CD8-positive, alpha-beta T cell (primary cell): ENCODE measurements at regions of chr12 and their contacts with region 1.

Region 1: GRCh38 chr12:8949342-8950220 is at the start of gene M6PR:
- DNase-seq: peak; percentile 71 to 95 (median 88)
- ATAC-seq: peak; percentile 72
- H3K4me3 ChIP-seq: peak within 1 kb of the TSS; percentile 97 to 98
- H3K4me3 Mint-ChIP-seq: peak within 1 kb of the TSS; percentile 94
- H3K27ac ChIP-seq: peak within 1 kb of the TSS; percentile 96 to 100
- H3K27ac Mint-ChIP-seq: peak within 1 kb of the TSS; percentile 95
- H3K4me1 ChIP-seq: peaks cover 58% of the 10 kb centered on the region
- H3K4me1 Mint-ChIP-seq: peaks cover 68% of the 10 kb centered on the region
- H3K27me3 ChIP-seq: no peaks in the 10 kb centered on the region
- H3K27me3 Mint-ChIP-seq: no peaks in the 10 kb centered on the region
- CTCF ChIP-seq: peak; percentile 48
- total RNA-seq, gene M6PR: 43.1 to 43.7 TPM

Region 2: DNA sequence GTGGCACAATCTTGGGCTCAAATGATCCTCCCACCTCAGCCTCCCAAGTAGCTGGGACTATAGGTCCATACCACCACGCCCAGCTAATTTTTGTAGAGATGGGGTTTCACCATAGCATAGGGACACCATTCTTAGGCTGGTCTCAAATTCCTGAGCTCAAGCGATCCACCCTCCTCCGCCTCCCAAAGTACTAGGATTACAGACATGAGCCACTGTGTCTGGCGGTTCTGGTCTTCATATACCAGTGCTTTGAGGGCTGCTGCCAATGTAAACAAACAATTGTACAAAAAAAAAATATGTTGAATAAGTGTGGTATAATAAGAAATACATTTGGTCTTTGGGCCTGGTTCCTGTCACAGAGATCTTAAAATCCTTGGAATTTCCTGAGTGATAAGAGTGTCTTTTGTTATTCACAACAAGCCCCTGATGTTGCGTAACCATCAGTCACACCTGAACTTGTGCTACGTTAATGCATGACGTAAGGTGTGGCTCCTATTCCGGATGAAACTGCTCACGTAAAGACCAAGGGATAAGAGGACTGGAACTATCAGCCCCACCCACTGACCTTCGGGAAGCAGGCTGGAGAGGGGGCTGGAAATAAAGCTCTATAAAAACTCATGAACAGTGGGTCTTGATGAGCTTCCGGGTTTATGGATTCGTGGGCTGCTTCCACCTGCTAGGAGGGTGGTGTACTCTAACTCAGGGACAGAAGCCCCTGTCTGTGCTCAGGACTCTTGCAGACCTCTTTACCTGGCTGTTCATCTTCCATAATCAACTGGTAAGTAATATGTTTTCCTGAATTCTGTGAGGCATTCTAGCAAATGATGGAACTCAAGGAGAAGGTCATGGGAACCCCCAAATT is 268.3 kb before region 1 on chr12:
- CTCF ChIA-PET with region 1: interaction called, 3 read pairs
- POLR2A ChIA-PET with region 1: no interaction called
- intact Hi-C with region 1: loop called in 1 of 2 experiments (anchors 5 kb)
- DNase-seq: no peak
- ATAC-seq: no peak
- H3K4me3 ChIP-seq: no peak overlapping the region
- H3K4me3 Mint-ChIP-seq: no peak overlapping the region
- H3K27ac ChIP-seq: no peak overlapping the region
- H3K27ac Mint-ChIP-seq: no peak overlapping the region
- H3K4me1 ChIP-seq: no peaks in the 10 kb centered on the region
- H3K4me1 Mint-ChIP-seq: peaks cover 10% of the 10 kb centered on the region
- H3K27me3 ChIP-seq: no peaks in the 10 kb centered on the region
- H3K27me3 Mint-ChIP-seq: peaks cover 2% of the 10 kb centered on the region
- CTCF ChIP-seq: no peak

Region 3: DNA sequence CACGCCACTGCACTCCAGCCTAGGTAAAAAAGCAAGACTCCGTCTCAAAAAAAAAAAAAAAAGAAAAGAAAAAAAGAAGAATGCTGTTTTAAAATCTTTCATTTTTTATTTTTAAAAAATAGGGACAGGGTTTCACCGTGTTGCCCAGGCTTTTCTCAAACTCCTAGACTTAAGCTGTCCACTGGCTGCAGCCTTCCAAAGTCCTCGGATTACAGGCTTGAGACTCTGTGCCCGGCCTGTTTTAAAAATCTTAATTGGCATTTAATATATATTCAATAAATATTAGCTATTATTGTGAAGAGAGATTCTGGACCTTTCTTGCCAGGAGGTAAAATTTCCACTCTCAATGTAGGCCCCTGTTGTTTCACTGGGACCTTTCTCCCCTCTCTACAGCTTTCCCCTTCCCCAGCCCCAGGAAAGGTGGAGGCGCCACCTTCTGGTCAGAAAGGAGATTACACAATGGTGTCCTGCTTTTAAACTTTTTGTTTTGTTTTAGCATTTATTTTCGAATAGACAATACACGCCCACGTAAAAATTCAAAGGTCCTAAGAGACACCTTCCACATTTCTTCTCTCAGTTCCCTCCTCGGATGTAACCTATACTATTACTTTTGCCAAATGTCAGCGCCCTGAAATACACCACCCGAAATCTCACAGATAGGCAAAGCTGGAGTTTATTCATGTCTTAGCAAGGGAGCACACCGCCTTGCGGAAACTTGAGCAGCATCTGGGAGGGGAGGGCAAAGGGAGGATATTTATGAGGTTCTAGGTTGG is 59.1 kb before region 1 on chr12:
- CTCF ChIA-PET with region 1: interaction called, 7 read pairs
- POLR2A ChIA-PET with region 1: no interaction called
- intact Hi-C with region 1: loop called in 1 of 2 experiments (anchors 1 kb)
- DNase-seq: peak; percentile 30 to 77 (median 55)
- ATAC-seq: peak; percentile 90
- H3K4me3 ChIP-seq: peak overlapping the region; percentile 44 to 55
- H3K4me3 Mint-ChIP-seq: peak overlapping the region; percentile 88
- H3K27ac ChIP-seq: peak overlapping the region in 1 of 2 experiments; percentile 26
- H3K27ac Mint-ChIP-seq: peak overlapping the region; percentile 66
- H3K4me1 ChIP-seq: no peaks in the 10 kb centered on the region
- H3K4me1 Mint-ChIP-seq: peaks cover 4% of the 10 kb centered on the region
- H3K27me3 ChIP-seq: no peaks in the 10 kb centered on the region
- H3K27me3 Mint-ChIP-seq: peaks cover 2% of the 10 kb centered on the region
- CTCF ChIP-seq: peak; percentile 94

Region 4: DNA sequence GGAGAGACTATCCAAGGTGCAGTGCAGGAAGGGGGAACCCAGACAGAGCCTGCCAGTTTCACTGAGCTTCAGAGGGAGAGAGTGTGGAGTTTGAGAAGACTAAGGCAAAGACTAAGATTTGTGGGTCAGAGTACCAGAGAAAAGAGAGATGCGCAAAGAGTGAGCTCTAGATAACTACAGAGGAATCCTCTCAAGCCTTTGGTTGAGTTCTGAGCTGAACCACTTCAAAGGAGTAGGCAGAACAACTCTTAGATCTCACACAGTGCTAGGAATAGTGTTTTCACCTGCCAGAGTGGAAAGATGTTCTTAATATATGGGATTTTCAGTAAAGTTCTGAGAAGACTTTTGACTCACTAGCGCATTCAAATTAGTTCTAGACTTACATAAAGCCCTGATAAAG is 10.6 kb after region 1 on chr12:
- CTCF ChIA-PET with region 1: interaction called, 41 read pairs
- POLR2A ChIA-PET with region 1: interaction called, 8 read pairs
- intact Hi-C with region 1: loop called in 1 of 2 experiments (anchors 1 kb)
- DNase-seq: peak in 2 of 9 experiments; percentile 38 to 64
- ATAC-seq: peak; percentile 96
- H3K4me3 ChIP-seq: no peak overlapping the region
- H3K4me3 Mint-ChIP-seq: peak overlapping the region; percentile 53
- H3K27ac ChIP-seq: peak overlapping the region in 1 of 2 experiments; percentile 17
- H3K27ac Mint-ChIP-seq: peak overlapping the region; percentile 81
- H3K4me1 ChIP-seq: peaks cover 52% of the 10 kb centered on the region
- H3K4me1 Mint-ChIP-seq: peaks cover 63% of the 10 kb centered on the region
- H3K27me3 ChIP-seq: no peaks in the 10 kb centered on the region
- H3K27me3 Mint-ChIP-seq: no peaks in the 10 kb centered on the region
- CTCF ChIP-seq: no peak

Region 5: DNA sequence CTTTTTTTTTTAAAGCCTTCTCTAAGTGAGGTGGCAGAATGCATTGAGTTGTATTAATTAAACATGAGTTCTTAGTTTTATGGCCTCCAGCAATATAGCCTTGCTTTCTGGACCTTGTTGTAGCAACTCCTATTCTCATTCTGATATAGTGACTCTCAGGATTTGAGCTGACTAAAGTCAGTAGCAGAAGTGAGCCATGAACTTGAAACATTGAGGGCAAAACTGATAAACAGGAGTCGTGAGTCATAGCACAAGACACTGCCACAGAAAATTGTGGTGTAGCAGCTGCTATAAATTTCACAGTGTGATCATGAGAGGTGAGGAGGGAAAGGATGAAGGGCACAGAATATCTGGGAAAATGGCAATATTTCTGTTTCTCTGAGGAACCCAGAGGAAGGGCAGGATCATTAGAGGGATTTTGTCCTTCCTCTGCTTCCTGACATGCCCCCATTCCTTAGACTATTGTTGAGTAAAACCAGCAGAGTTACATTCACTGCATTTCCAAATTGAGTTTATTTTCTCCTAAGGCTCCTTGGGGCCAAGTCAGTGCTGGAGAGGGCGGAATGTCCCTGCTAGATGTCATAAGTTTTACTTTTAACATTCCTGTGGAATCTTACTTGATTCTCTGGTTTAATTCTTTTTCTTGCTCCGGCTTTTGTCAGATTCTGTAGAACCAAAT is 47.2 kb after region 1 on chr12:
- CTCF ChIA-PET with region 1: interaction called, 15 read pairs
- POLR2A ChIA-PET with region 1: interaction called, 5 read pairs
- intact Hi-C with region 1: loop called in 1 of 2 experiments (anchors 5 kb)
- DNase-seq: peak in 5 of 9 experiments; percentile 8 to 71 (median 24)
- ATAC-seq: peak; percentile 68
- H3K4me3 ChIP-seq: peak overlapping the region in 1 of 2 experiments; percentile 25
- H3K4me3 Mint-ChIP-seq: peak overlapping the region; percentile 61
- H3K27ac ChIP-seq: peak overlapping the region in 1 of 2 experiments; percentile 83
- H3K27ac Mint-ChIP-seq: peak overlapping the region; percentile 89
- H3K4me1 ChIP-seq: peaks cover 52% of the 10 kb centered on the region
- H3K4me1 Mint-ChIP-seq: peaks cover 65% of the 10 kb centered on the region
- H3K27me3 ChIP-seq: no peaks in the 10 kb centered on the region
- H3K27me3 Mint-ChIP-seq: no peaks in the 10 kb centered on the region
- CTCF ChIP-seq: no peak

Region 6: GRCh38 chr12:9032202-9033178 is 82.9 kb after region 1 on chr12:
- CTCF ChIA-PET with region 1: interaction called, 195 read pairs
- POLR2A ChIA-PET with region 1: interaction called, 20 read pairs
- intact Hi-C with region 1: no loop called
- DNase-seq: no peak
- ATAC-seq: no peak
- H3K4me3 ChIP-seq: no peak overlapping the region
- H3K4me3 Mint-ChIP-seq: no peak overlapping the region
- H3K27ac ChIP-seq: peak overlapping the region in 1 of 2 experiments; percentile 2
- H3K27ac Mint-ChIP-seq: peak overlapping the region; percentile 38
- H3K4me1 ChIP-seq: peaks cover 49% of the 10 kb centered on the region
- H3K4me1 Mint-ChIP-seq: peaks cover 66% of the 10 kb centered on the region
- H3K27me3 ChIP-seq: no peaks in the 10 kb centered on the region
- H3K27me3 Mint-ChIP-seq: no peaks in the 10 kb centered on the region
- CTCF ChIP-seq: no peak

Region 7: DNA sequence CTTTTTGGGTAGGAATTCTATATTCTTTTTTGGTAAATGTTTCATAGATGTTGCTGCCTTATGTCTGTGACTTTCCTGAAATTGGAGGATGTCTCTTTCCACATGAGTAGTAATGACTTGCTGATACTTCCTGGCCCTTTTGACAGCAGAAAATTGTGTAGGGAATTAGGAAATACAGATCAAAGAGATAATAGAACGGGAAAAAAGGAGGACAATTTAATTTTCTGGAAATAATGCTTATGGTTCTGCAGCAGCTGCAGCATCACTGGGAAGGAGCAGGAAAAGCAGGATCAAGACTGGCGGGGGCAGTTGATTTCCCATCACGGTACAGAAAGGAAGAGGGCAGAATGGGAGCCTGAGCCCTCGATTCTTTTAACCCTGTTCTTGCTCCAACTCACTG is 327.4 kb after region 1 on chr12:
- CTCF ChIA-PET with region 1: no interaction called
- POLR2A ChIA-PET with region 1: no interaction called
- intact Hi-C with region 1: loop called in 1 of 2 experiments (anchors 5 kb)
- DNase-seq: no peak
- ATAC-seq: no peak
- H3K4me3 ChIP-seq: no peak overlapping the region
- H3K4me3 Mint-ChIP-seq: no peak overlapping the region
- H3K27ac ChIP-seq: no peak overlapping the region
- H3K27ac Mint-ChIP-seq: no peak overlapping the region
- H3K4me1 ChIP-seq: no peaks in the 10 kb centered on the region
- H3K4me1 Mint-ChIP-seq: no peaks in the 10 kb centered on the region
- H3K27me3 ChIP-seq: no peaks in the 10 kb centered on the region
- H3K27me3 Mint-ChIP-seq: peaks cover 3% of the 10 kb centered on the region
- CTCF ChIP-seq: no peak